ENCODE measurements at regions of chr12 and their contacts with region 1.

Region 1: DNA sequence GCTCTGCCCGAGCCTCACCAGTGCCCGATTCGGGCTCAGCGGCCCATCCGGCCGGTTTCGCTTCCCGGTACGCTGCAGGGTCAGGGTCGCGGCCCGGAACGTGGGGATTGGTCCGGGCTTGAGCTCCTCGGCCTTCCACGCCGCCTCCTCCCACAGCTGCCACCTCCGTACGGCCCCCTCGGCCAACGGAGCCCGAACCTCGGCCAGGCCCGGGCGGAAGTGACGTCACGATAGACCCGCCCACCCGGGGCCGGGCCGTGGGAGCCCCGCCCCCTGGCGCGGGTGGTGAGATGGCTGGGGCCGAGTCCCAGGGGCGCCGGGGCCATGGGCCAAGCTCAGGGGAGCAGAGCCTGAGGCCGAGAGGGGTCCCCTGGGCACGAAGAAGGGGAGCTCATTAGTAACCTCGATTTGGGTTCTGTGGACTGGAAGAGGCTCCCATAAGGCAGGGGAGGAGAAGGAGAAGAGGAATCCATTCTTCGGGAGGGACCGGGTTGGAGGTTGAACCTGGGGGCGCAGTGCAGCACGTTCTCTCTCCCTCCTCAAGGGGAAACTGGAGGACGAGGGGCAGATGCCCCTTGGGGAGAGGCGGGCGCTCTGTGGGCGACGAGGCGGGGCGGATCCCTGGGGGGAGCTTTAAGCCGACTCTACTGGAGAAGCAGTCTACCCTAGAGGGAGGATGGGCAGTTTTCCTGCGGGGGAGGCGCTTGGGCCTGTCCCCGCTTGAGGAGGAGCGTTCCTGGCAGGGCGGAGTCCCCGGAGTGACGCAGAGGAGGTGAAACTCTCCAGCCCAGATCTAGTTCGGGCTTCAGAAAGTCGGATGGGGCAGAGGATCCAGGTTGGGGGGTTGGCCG is at the start of gene MLF2:
- DNase-seq: peak; percentile 93 to 99
- H3K4me3 ChIP-seq: peak within 1 kb of the TSS; percentile 59 to 96
- H3K27ac ChIP-seq: peak within 1 kb of the TSS; percentile 95 to 98
- H3K4me1 ChIP-seq: peaks cover 7 to 9% of the 10 kb centered on the region in 2 donors
- H3K27me3 ChIP-seq: no peaks in the 10 kb centered on the region
- CTCF ChIP-seq: peak in 1 of 3 experiments; percentile 91
- total RNA-seq, gene MLF2: 145 TPM

Region 2: DNA sequence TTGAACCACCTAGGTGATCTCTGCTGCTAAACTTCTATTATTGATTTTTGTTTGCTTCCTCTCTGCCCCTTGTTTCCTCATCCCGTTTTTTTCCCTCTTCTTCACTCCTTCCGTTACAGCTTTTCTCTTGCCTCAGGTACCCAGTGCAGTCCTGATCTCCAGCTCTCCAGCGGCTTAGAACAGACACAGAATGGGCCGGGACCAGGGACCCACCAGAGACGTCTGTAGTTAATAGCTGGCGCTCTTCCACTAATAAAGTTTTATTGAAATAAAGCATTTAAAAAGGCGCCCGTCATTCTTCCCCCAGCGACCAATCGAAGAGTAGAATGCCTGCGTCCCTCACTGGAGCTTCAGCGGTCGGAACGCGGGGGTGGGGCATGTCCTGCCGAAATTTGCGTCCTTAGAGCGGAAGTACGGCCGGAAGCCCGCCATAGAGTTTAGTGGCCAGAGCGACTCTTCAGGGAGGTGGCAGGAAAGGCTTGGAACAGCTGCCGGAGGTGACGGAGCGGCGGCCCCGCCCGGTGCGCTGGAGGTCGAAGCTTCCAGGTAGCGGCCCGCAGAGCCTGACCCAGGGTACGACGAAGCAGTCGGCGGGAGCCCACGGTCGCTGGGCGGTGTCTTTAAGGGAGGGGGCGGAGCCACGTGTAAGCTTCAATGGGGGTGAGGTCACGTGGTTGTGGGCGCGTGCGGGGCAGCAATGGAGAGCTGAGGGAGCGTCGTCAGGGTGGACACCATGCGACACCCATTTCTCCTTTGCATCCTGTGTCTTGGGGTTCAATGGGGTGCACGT is 29.3 kb before region 1 on chr12 and contains the start of gene COPS7A:
- intact Hi-C with region 1: loop called (anchors 2 kb)
- DNase-seq: peak; percentile 91 to 99
- H3K4me3 ChIP-seq: peak within 1 kb of the TSS; percentile 62 to 70
- H3K27ac ChIP-seq: peak within 1 kb of the TSS; percentile 75 to 93
- H3K4me1 ChIP-seq: peaks cover 0 to 8% of the 10 kb centered on the region in 2 donors
- H3K27me3 ChIP-seq: no peaks in the 10 kb centered on the region
- CTCF ChIP-seq: no peak
- total RNA-seq, gene COPS7A: 221 TPM

Region 3: DNA sequence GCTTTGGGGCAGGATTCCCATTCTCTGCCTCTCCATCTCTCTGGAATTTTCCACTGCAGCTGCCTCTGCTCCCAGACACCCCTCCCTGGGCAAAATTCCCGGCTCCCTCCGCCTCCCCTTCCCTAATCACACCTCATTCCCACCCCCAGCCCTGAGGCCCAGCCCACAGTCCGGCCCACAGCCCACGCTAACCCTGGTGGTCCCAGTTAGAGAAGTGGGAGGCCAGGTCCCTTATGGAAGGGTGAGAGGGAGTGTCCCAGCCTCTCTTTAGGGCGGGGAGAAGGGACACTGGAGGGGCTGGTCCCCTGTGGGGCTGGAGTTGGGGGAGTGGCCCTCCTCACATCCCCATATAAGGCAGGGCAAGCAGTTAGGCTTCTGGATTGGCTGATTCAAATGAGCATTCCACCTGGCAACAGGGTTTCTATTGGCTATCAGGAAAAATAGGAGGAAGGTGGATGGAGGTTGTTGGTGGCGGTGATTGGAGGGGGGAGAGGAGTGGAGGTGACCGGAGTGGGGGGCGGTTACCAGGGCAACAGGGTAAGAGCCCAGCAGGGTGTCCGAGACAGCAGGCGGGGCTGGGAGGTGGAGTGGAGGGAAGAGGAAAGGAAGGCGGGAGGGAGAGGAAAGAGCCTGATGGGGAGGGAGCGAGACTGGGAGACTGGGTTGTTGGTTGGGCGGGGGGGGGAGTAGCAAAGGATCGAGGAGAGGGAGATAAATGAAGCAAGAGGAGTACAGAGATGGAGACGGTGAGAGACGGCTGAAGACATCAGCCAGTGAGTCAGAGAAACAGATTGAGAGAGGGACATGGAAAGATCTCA is 11.1 kb after region 1 on chr12:
- intact Hi-C with region 1: loop called (anchors 1 kb)
- DNase-seq: peak; percentile 85 to 96
- H3K4me3 ChIP-seq: peak overlapping the region; percentile 96 to 97
- H3K27ac ChIP-seq: peak overlapping the region; percentile 84 to 97
- H3K4me1 ChIP-seq: peaks cover 10 to 29% of the 10 kb centered on the region in 2 donors
- H3K27me3 ChIP-seq: no peaks in the 10 kb centered on the region
- CTCF ChIP-seq: no peak

Region 4: GRCh38 chr12:6825398-6826124 is 72.4 kb after region 1 on chr12:
- intact Hi-C with region 1: loop called (anchors 1 kb)
- DNase-seq: peak; percentile 53 to 93
- H3K4me3 ChIP-seq: peak overlapping the region in 1 of 2 donors; percentile 46
- H3K27ac ChIP-seq: no peak overlapping the region
- H3K4me1 ChIP-seq: peaks cover 3 to 23% of the 10 kb centered on the region in 2 donors
- H3K27me3 ChIP-seq: peaks cover 7% of the 10 kb centered on the region
- CTCF ChIP-seq: peak; percentile 90 to 93 (median 91)

Region 5: DNA sequence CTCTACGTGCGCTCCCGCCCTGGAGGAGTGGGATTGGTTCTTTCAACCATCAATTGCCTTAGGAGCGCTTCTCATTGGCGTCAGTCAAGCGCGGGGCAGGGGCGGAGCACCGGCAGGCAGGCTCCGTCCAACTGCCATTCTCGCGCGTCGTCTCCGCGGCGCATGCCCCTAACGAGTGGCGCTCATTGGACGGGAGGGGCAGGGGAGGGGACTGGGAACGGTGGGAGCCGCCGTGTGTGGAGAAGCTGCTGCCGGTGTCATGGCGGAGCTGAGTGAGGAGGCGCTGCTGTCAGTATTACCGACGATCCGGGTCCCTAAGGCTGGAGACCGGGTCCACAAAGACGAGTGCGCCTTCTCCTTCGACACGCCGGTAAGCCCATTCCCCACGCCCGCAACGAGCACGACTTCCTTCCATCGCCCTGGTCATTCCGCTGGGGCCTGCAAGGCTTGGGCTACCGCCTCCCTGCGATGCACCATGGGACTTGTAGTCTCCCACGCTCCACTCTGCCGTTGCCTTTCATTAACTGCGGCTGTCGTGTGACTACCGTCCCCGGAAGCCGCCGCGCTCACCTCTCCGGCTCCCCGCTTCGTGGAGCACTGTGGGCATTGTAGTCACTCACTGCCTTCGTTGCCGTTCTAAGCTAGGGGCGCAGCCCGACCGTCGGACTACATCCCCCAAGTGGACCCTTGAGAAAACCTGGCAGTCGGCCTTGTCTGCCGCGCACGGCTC is 98.9 kb after region 1 on chr12 and contains the start of gene USP5:
- intact Hi-C with region 1: no loop called
- DNase-seq: peak; percentile 99 to 100
- H3K4me3 ChIP-seq: peak within 1 kb of the TSS; percentile 65 to 79
- H3K27ac ChIP-seq: peak within 1 kb of the TSS; percentile 90 to 94
- H3K4me1 ChIP-seq: peaks cover 4 to 18% of the 10 kb centered on the region in 2 donors
- H3K27me3 ChIP-seq: no peaks in the 10 kb centered on the region
- CTCF ChIP-seq: no peak
- total RNA-seq, gene USP5: 46.2 TPM

Measured in ascending aorta (tissue), 2 donors.